ENCODE measurements at regions of chr16 and their contacts with region 1.

Region 1: DNA sequence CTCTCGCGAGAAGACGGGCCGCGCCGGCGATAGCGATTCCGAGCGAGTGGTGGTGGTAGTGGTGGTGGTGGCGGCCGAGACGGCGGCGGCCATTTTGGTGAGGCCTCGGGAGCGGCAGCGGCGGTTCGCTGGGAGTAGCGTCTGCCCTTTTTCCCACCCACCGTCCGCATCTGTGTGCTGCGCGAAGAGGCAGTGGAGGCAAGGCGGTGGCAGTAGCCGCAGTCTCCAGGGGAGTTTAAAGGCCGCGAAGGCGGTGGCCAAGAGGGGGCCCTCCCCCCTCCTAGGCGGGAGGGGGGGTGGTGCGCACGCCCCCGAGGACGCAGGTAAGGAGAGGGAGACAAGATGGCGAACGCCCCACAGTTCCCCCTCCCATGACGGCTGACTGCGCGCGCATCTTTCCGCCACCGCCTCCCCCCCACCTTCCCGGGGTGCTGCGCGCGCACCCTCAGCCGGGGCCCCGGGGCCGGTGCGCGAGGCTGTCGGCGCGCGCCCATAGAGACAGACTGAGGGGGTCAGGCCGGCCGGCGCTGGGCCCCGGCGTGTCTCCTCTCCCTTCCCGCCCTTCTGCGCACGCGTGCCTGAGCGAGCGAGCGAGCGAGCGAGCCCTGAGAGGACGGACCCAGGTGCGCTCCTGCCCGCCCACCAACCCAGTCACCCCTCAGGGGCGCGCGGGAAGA is 694 bp upstream of the SRCAP start:
- DNase-seq: peak; percentile 99
- H3K4me3 Mint-ChIP-seq: peak overlapping the region; percentile 96
- H3K27ac Mint-ChIP-seq: peak overlapping the region; percentile 99
- H3K4me1 Mint-ChIP-seq: peaks cover 29% of the 10 kb centered on the region
- H3K27me3 Mint-ChIP-seq: no peaks in the 10 kb centered on the region

Region 2: GRCh38 chr16:30715737-30716445 is 17.6 kb after region 1 on chr16:
- CTCF ChIA-PET with region 1: interaction called, 4 read pairs
- POLR2A ChIA-PET with region 1: interaction called, 3 read pairs
- intact Hi-C with region 1: loop called (anchors 1 kb)
- DNase-seq: peak; percentile 63
- H3K4me3 Mint-ChIP-seq: peak overlapping the region; percentile 42
- H3K27ac Mint-ChIP-seq: peak overlapping the region; percentile 97
- H3K4me1 Mint-ChIP-seq: peaks cover 37% of the 10 kb centered on the region
- H3K27me3 Mint-ChIP-seq: no peaks in the 10 kb centered on the region

Region 3: GRCh38 chr16:30820952-30821760 is 122.9 kb after region 1 on chr16:
- CTCF ChIA-PET with region 1: no interaction called
- POLR2A ChIA-PET with region 1: no interaction called
- intact Hi-C with region 1: no loop called
- DNase-seq: no peak
- H3K4me3 Mint-ChIP-seq: no peak overlapping the region
- H3K27ac Mint-ChIP-seq: no peak overlapping the region
- H3K4me1 Mint-ChIP-seq: no peaks in the 10 kb centered on the region
- H3K27me3 Mint-ChIP-seq: no peaks in the 10 kb centered on the region

Region 4: DNA sequence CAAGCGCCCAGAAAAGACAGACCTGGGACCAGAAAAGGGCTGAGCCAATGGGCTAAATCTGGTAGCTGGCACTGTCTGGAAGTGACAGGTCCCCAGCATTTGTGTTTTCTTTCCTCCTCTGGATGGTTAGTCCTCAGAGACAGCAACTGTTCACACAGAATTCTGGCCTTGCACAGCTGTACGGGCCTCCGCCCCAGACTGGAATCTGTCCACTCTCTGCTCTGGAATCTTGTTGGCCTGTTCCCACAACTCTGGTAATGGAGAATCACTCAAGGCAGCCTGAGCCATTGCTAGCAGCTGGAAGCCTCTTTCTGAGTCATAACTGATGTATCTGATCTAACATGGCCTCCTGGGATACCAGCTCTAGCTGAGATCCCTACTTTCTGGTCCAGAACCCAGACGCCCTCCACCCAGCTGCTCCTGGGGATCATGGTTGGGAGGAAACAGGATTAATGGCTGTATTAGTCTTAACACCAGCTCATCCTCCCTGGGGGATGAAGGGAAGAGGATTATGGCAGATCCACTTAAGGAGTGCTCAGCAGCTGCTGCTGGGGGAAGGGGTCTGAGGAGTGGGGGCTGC is 366.7 kb after region 1 on chr16:
- CTCF ChIA-PET with region 1: no interaction called
- POLR2A ChIA-PET with region 1: no interaction called
- intact Hi-C with region 1: no loop called
- DNase-seq: no peak
- H3K4me3 Mint-ChIP-seq: peak overlapping the region; percentile 23
- H3K27ac Mint-ChIP-seq: peak overlapping the region; percentile 69
- H3K4me1 Mint-ChIP-seq: peaks cover 36% of the 10 kb centered on the region
- H3K27me3 Mint-ChIP-seq: no peaks in the 10 kb centered on the region

Measured in activated CD4-positive, alpha-beta memory T cell treated with anti-CD3 and anti-CD28 coated beads for 36 hours (primary cell).